Heart left ventricle (tissue), 16 donors: ENCODE measurements at regions of chr9 and their contacts with region 1.

Region 1: DNA sequence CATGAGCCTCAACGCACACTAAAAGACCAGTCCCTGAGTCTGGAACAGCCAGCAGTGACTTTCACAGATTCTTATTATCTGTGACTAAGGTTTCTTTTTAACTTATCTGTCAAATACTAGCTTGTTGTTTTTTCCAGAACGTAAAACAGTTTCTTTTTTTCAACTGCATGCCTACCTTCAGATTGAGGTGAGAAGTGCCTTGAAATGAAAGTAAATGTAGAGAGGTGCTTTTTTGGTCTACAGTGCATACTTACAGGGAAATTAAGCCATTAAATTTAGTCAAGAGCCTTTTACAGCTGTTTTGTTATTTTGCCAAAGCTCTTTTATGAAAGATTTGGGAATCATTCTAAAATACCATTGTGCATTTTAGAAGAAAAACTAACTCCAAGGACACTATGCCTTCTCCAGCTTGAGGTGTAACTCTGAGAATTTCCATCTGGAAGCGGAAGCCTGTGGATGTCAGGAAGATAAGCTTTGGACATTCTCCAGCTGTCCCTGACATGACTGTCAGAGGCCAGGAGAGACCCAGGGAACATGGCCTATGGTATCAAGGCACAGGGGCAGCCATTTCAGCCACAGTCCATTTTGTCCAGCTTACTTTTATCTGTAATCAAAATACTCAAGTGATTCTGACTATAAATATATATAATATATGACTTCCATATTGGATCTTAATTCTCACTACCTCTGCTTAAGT is 230.3 kb downstream of the GLIS3 start:
- DNase-seq: peak in 1 of 5 donors; percentile 17
- ATAC-seq: peak in 3 of 4 donors; percentile 27 to 62 (median 54)
- H3K4me3 ChIP-seq: peak overlapping the region in 3 of 12 donors; percentile 3 to 33 (median 30)
- H3K27ac ChIP-seq: peak overlapping the region in 7 of 12 donors; percentile 13 to 60 (median 37)
- H3K4me1 ChIP-seq: peaks cover 0 to 17% (median 4%) of the 10 kb centered on the region in 12 donors
- H3K27me3 ChIP-seq: no peaks in the 10 kb centered on the region
- CTCF ChIP-seq: no peak
- POLR2A ChIP-seq: no peak

Region 2: DNA sequence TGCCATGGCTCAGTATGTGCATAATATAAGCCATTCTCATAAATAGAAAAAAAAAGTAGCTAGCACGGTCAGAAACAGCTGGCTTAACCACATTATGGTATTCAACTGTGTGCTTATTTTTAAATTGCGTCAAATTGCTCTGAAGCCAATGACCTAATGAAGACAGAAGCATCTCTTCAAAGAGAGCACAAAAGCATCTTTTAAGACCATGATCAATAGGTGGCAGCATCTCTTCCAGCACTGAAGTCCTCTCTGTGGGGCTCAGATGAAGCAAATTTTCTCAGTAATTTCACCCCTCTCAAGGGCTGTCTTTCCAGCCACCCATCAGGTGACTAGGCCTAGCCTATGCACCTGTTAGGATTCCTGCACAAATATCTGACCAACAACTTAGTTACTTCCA is 21.2 kb before region 1 on chr9:
- intact Hi-C with region 1: loop called in 1 of 10 experiments (anchors 2 kb)
- DNase-seq: no peak
- ATAC-seq: no peak
- H3K4me3 ChIP-seq: no peak overlapping the region
- H3K27ac ChIP-seq: no peak overlapping the region
- H3K4me1 ChIP-seq: peaks cover 0 to 2% (median 0%) of the 10 kb centered on the region in 12 donors
- H3K27me3 ChIP-seq: no peaks in the 10 kb centered on the region
- CTCF ChIP-seq: peak in 8 of 12 donors; percentile 14 to 44 (median 28)
- POLR2A ChIP-seq: no peak